ENCODE measurements at regions of chr10 and their contacts with region 1.

Region 1: GRCh38 chr10:75099952-75100763 is 11.3 kb upstream of the SAMD8 start:
- DNase-seq: peak; percentile 34
- H3K4me3 ChIP-seq: no peak overlapping the region
- H3K27ac ChIP-seq: no peak overlapping the region
- H3K4me1 ChIP-seq: peaks cover 20% of the 10 kb centered on the region
- H3K27me3 ChIP-seq: no peaks in the 10 kb centered on the region
- CTCF ChIP-seq: peak; percentile 81 to 99

Region 2: DNA sequence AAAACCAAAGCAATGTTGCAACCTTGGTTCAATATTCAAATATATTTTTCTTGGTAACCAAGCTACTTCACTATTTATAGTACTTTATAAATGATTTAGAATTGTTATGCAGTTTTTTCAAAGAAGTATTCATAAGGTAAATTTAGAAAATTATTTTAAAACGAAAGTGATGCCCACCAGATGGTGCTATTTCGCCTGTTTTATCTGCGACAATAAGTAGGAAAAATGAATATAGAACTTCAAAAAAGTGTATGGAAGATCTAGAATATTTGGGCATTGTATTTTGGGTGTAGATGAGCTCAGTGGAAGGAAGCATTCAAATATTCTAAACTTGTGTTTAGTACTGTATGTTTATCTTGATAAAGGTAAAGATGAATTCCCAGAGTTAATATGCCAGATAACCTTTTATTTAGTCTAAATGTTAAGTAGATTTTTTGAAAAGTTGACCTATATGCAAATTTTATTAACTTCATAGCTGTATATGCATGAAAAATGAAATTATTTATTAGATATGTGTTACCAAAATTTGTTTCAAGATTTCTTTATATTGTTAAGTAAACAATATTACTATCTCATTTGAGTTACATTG is 856.0 kb before region 1 on chr10:
- CTCF ChIA-PET with region 1: no interaction called
- dilution Hi-C with region 1: no loop called
- in situ Hi-C with region 1: no loop called
- intact Hi-C with region 1: loop called (anchors 5 kb)
- DNase-seq: no peak
- H3K4me3 ChIP-seq: no peak overlapping the region
- H3K27ac ChIP-seq: no peak overlapping the region
- H3K4me1 ChIP-seq: no peaks in the 10 kb centered on the region
- H3K27me3 ChIP-seq: no peaks in the 10 kb centered on the region
- CTCF ChIP-seq: peak; percentile 34 to 48

Region 3: DNA sequence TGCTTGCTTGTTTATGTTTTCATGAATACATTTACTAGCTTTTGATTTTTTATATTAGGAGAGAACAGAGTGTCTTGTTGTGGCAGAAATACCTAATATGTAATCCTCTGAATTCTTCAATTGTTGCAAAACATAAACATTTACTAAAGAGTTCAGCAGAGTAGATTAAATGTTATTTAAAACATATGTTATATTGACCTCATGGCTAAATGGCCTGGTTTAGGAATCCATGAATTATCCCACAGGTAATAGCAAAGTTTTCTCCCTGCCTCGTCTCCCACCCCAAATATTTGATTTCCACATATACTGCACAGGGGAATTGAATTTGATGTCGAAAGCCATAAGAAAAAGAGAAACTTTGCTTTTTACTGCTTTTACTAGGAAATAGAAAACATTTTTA is 837.3 kb before region 1 on chr10:
- CTCF ChIA-PET with region 1: no interaction called
- dilution Hi-C with region 1: no loop called
- in situ Hi-C with region 1: loop called in 1 of 2 experiments (anchors 10 kb)
- intact Hi-C with region 1: loop called (anchors 5 kb)
- DNase-seq: no peak
- H3K4me3 ChIP-seq: no peak overlapping the region
- H3K27ac ChIP-seq: no peak overlapping the region
- H3K4me1 ChIP-seq: no peaks in the 10 kb centered on the region
- H3K27me3 ChIP-seq: no peaks in the 10 kb centered on the region
- CTCF ChIP-seq: no peak

Region 4: DNA sequence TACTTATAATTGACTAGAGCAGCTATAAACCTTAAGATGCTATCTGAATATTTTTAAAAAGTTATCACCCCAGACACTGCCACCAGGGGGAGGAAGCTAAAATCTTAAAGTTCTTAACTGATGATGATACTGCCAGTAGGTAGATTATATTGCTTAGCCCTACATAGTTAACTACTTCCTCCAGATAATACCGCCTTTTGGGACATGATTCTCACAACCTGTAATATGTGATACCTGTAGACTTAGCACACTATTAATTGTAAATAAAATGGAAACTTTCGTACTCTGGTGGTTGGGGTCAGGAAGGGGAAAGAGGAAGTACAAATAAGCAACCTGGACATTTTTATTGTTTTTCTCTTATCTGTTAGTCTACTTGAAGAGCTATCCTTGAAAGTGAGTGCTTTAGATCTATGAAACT is 680.2 kb before region 1 on chr10:
- CTCF ChIA-PET with region 1: no interaction called
- dilution Hi-C with region 1: no loop called
- in situ Hi-C with region 1: no loop called
- intact Hi-C with region 1: loop called (anchors 5 kb)
- DNase-seq: peak; percentile 9
- H3K4me3 ChIP-seq: no peak overlapping the region
- H3K27ac ChIP-seq: no peak overlapping the region
- H3K4me1 ChIP-seq: peaks cover 5% of the 10 kb centered on the region
- H3K27me3 ChIP-seq: no peaks in the 10 kb centered on the region
- CTCF ChIP-seq: peak; percentile 39 to 46

Region 5: GRCh38 chr10:74753442-74754211 is 346.5 kb before region 1 on chr10:
- CTCF ChIA-PET with region 1: no interaction called
- dilution Hi-C with region 1: no loop called
- in situ Hi-C with region 1: no loop called
- intact Hi-C with region 1: loop called (anchors 10 kb)
- DNase-seq: no peak
- H3K4me3 ChIP-seq: no peak overlapping the region
- H3K27ac ChIP-seq: no peak overlapping the region
- H3K4me1 ChIP-seq: no peaks in the 10 kb centered on the region
- H3K27me3 ChIP-seq: no peaks in the 10 kb centered on the region
- CTCF ChIP-seq: no peak

Region 6: GRCh38 chr10:75019370-75019769 is 80.8 kb before region 1 on chr10:
- CTCF ChIA-PET with region 1: no interaction called
- dilution Hi-C with region 1: no loop called
- in situ Hi-C with region 1: no loop called
- intact Hi-C with region 1: loop called (anchors 2 kb)
- DNase-seq: peak; percentile 7
- H3K4me3 ChIP-seq: no peak overlapping the region
- H3K27ac ChIP-seq: no peak overlapping the region
- H3K4me1 ChIP-seq: no peaks in the 10 kb centered on the region
- H3K27me3 ChIP-seq: no peaks in the 10 kb centered on the region
- CTCF ChIP-seq: peak; percentile 5 to 42

Region 7: GRCh38 chr10:75042292-75042974 is 57.7 kb before region 1 on chr10:
- CTCF ChIA-PET with region 1: no interaction called
- dilution Hi-C with region 1: loop called (anchors 5 kb)
- in situ Hi-C with region 1: no loop called
- intact Hi-C with region 1: no loop called
- DNase-seq: peak; percentile 68
- H3K4me3 ChIP-seq: no peak overlapping the region
- H3K27ac ChIP-seq: no peak overlapping the region
- H3K4me1 ChIP-seq: peaks cover 4% of the 10 kb centered on the region
- H3K27me3 ChIP-seq: no peaks in the 10 kb centered on the region
- CTCF ChIP-seq: no peak